Ascending aorta (tissue), 2 donors: ENCODE measurements at regions of chrX and their contacts with region 1.

Region 1: GRCh38 chrX:9464435-9465371 is at the start of gene TBL1X:
- DNase-seq: peak in 1 of 2 donors; percentile 73
- H3K4me3 ChIP-seq: peak within 1 kb of the TSS; percentile 63 to 70
- H3K27ac ChIP-seq: peak within 1 kb of the TSS; percentile 87 to 93
- H3K4me1 ChIP-seq: peaks cover 3 to 33% of the 10 kb centered on the region in 2 donors
- H3K27me3 ChIP-seq: no peaks in the 10 kb centered on the region
- CTCF ChIP-seq: no peak
- total RNA-seq, gene TBL1X: 15.4 TPM

Region 2: DNA sequence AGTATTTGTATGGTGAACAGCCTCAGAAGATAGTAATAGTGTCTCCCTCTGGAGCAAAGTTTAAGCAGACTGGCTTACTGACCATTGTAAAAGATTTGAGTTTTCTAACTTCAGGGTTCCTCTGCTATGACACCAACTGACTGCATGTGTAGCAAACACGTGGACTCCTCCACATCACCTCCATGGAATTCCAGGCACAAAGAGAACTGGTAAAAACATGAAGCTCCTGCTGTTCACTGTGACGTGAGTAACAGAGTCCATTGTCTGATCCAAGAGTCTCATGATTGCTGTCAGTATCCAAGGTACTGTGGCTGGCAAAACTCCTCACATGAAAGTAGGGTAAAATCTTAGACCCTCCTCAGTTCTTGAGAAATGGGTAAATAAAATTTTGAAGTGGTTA is 323.2 kb before region 1 on chrX:
- intact Hi-C with region 1: no loop called
- DNase-seq: no peak
- H3K4me3 ChIP-seq: no peak overlapping the region
- H3K27ac ChIP-seq: no peak overlapping the region
- H3K4me1 ChIP-seq: no peaks in the 10 kb centered on the region
- H3K27me3 ChIP-seq: no peaks in the 10 kb centered on the region
- CTCF ChIP-seq: no peak

Region 3: GRCh38 chrX:9341291-9342201 is 123.2 kb before region 1 on chrX:
- intact Hi-C with region 1: loop called (anchors 1 kb)
- DNase-seq: peak in 1 of 2 donors; percentile 85
- H3K4me3 ChIP-seq: peak overlapping the region; percentile 55 to 68
- H3K27ac ChIP-seq: peak overlapping the region; percentile 88 to 90
- H3K4me1 ChIP-seq: peaks cover 10 to 33% of the 10 kb centered on the region in 2 donors
- H3K27me3 ChIP-seq: no peaks in the 10 kb centered on the region
- CTCF ChIP-seq: no peak

Region 4: DNA sequence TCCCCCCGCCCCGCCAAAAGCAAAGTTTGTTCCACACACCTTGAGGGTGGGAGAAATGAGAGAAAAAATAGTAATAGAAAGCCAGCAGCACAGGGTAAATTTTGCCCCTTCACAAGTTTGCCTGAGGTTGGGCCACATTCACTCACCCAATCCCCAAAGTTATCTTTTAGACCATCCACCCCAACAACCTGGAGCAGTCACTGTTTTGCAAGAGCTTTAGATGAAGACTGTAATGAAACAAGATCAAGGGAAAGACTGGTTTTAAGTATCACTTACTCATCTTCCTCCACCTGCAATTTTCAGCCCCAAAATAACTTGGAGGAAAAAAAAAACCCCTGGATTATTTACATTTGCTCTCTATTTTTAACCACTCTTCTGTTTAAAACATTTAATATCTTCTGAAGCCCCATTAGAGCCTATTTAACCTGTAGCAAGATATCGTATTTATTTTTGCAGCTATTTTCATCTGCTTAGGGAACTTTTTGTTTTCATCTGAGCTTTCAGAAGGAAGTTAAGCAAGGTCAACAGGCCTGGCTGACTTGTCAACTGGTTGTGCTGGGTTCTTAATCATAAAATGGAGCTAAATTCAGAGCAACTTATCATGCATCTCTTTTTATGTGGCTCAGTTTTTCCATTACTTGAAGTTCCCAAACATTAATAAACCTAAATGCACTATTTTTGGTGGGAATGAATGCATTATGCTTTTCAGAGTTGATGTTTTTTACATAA is 24.4 kb before region 1 on chrX:
- intact Hi-C with region 1: loop called (anchors 2 kb)
- DNase-seq: peak in 1 of 2 donors; percentile 75
- H3K4me3 ChIP-seq: peak overlapping the region in 1 of 2 donors; percentile 4
- H3K27ac ChIP-seq: peak overlapping the region; percentile 63 to 79
- H3K4me1 ChIP-seq: peaks cover 0 to 22% of the 10 kb centered on the region in 2 donors
- H3K27me3 ChIP-seq: no peaks in the 10 kb centered on the region
- CTCF ChIP-seq: no peak

Region 5: DNA sequence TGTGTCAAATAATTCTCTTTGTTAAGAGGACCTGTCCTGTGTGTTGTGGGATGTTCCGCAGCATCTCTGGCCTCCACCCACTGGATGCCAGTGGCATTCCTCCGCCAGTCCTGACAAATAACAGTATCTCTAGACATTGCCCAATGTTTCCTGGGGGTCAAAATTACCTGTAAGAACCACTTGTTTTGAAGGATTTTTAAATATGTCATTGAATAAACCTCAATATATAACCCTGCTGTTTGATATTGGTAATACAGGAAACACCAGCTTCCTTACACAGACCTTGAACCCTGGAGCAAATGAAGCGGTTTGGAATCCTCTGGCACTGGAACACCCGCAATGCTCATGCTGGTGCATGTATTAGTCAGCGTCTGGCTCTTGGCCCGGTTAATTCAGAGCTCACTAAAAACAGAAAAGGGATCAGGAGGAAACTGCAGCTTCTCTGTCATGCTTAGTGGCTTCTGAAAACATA is 101.5 kb after region 1 on chrX:
- intact Hi-C with region 1: loop called (anchors 10 kb)
- DNase-seq: peak in 1 of 2 donors; percentile 79
- H3K4me3 ChIP-seq: no peak overlapping the region
- H3K27ac ChIP-seq: no peak overlapping the region
- H3K4me1 ChIP-seq: peaks cover 0 to 17% of the 10 kb centered on the region in 2 donors
- H3K27me3 ChIP-seq: no peaks in the 10 kb centered on the region
- CTCF ChIP-seq: no peak

Region 6: DNA sequence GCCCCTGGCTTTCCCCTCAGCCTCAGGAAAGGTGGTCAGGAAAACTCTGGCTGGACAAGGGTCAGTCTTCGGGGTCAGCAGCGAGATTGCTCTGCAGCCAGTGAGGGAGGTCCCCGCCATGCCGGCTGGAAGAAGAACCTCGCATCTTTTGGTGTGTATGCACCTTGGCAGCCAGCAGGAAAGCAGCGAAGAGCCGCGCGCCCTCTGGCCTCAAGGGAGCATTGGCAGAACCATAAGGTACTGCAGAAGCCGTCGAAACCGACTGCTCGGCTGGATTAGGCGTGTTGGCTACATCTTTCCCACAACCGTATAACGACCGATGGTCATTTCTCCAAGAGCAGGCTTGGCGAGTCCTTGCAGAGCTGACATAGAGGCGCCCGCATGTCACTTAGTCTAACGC is 252.7 kb after region 1 on chrX:
- intact Hi-C with region 1: no loop called
- DNase-seq: no peak
- H3K4me3 ChIP-seq: no peak overlapping the region
- H3K27ac ChIP-seq: no peak overlapping the region
- H3K4me1 ChIP-seq: no peaks in the 10 kb centered on the region
- H3K27me3 ChIP-seq: no peaks in the 10 kb centered on the region
- CTCF ChIP-seq: no peak